Posterior vena cava (tissue), 2 donors: ENCODE measurements at regions of chr13 and their contacts with region 1.

Region 1: DNA sequence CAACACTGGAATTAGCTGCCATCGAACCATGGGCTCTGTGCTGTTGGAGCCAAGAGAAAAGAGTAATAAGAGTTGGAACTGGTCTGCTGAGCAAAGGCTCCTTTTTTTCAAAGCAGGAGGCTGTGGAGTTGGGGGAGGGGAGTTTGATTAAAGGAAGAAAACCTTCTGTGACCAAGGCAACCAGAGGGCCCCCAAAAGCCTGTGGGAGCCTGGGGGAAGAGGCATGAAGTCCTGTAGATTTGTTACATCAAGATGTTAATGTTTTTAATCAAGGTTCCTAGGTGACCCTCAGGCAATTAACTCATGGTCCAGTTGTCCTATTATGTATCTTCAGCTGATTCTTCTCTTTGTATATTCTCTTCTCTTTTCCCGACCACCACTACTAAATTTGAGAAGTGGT is 403.9 kb downstream of the NDFIP2 start:
- DNase-seq: no peak

Region 2: GRCh38 chr13:80666782-80667552 is 782.1 kb after region 1 on chr13:
- intact Hi-C with region 1: loop called in 1 of 2 experiments (anchors 5 kb)
- DNase-seq: no peak